CD4-positive, alpha-beta memory T cell (primary cell): ENCODE measurements at regions of chr7 and their contacts with region 1.

Region 1: DNA sequence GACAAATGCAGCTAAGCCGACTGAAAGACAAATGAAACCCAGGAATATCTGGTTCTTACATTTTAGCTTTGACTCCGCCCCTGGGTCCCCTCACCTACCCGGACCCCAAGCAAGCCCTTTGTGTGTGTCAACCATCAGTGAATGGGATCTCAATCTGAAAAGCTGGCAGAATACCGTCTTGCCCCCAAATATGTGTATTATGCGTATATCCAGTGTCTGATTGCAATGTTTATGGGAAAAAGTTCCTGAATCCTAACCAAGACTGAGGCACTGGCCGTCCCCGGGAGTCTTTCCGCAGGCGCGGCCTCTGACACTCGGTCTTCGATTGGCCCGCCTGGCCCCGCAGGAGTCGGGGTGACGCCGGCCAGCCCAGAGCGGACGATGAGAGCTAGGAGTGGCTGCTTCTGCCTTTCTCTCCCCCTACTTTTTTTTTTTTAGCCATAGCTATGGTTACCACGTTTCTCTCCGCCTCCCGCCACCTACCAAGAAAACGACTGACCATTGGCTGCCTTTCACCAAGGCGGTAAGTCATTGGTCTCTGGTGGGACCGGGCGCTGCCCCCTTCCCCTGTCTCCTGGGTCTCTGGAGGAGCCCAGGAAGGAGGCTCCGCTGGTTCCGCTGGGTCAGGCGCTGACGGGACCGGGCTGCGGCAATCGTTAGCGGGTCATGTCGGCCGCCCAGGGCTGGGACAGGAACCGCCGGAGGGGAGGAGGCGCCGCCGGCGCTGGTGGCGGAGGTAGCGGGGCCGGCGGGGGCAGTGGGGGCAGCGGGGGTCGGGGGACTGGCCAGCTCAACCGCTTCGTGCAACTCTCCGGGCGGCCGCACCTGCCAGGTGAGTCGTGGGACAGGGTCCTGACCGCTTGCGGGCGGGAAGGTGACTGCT is at the start of gene KLHDC10:
- DNase-seq: peak; percentile 96 to 98 (median 97)
- H3K4me3 ChIP-seq: peak within 1 kb of the TSS; percentile 63 to 89
- H3K4me3 Mint-ChIP-seq: peak within 1 kb of the TSS; percentile 88 to 97 (median 94)
- H3K27ac ChIP-seq: peak within 1 kb of the TSS; percentile 68
- H3K27ac Mint-ChIP-seq: peak within 1 kb of the TSS; percentile 91 to 99 (median 94)
- H3K4me1 ChIP-seq: peaks cover 48% of the 10 kb centered on the region
- H3K4me1 Mint-ChIP-seq: peaks cover 28 to 50% (median 41%) of the 10 kb centered on the region in 4 donors
- H3K27me3 ChIP-seq: no peaks in the 10 kb centered on the region
- H3K27me3 Mint-ChIP-seq: peaks cover 2% of the 10 kb centered on the region in 2 donors
- total RNA-seq, gene KLHDC10: 21.4 to 22.3 TPM

Region 2: GRCh38 chr7:129670656-129671055 is 399.6 kb before region 1 on chr7:
- CTCF ChIA-PET with region 1: no interaction called
- POLR2A ChIA-PET with region 1: no interaction called
- intact Hi-C with region 1: no loop called
- DNase-seq: no peak
- H3K4me3 ChIP-seq: no peak overlapping the region
- H3K4me3 Mint-ChIP-seq: no peak overlapping the region
- H3K27ac ChIP-seq: no peak overlapping the region
- H3K27ac Mint-ChIP-seq: no peak overlapping the region
- H3K4me1 ChIP-seq: no peaks in the 10 kb centered on the region
- H3K4me1 Mint-ChIP-seq: peaks cover 0 to 7% (median 1%) of the 10 kb centered on the region in 4 donors
- H3K27me3 ChIP-seq: no peaks in the 10 kb centered on the region
- H3K27me3 Mint-ChIP-seq: no peaks in the 10 kb centered on the region

Region 3: GRCh38 chr7:129840757-129841156 is 229.5 kb before region 1 on chr7:
- CTCF ChIA-PET with region 1: no interaction called
- POLR2A ChIA-PET with region 1: no interaction called
- intact Hi-C with region 1: no loop called
- DNase-seq: no peak
- H3K4me3 ChIP-seq: no peak overlapping the region
- H3K4me3 Mint-ChIP-seq: peak overlapping the region in 2 of 8 donors; percentile 30 to 33
- H3K27ac ChIP-seq: no peak overlapping the region
- H3K27ac Mint-ChIP-seq: peak overlapping the region in 4 of 7 donors; percentile 19 to 82 (median 52)
- H3K4me1 ChIP-seq: peaks cover 43% of the 10 kb centered on the region
- H3K4me1 Mint-ChIP-seq: peaks cover 34 to 52% (median 41%) of the 10 kb centered on the region in 4 donors
- H3K27me3 ChIP-seq: no peaks in the 10 kb centered on the region
- H3K27me3 Mint-ChIP-seq: no peaks in the 10 kb centered on the region

Region 4: GRCh38 chr7:129952653-129953560 is 117.3 kb before region 1 on chr7 and contains the start of gene UBE2H:
- CTCF ChIA-PET with region 1: no interaction called
- POLR2A ChIA-PET with region 1: no interaction called
- intact Hi-C with region 1: loop called (anchors 2 kb)
- DNase-seq: peak; percentile 83 to 89 (median 86)
- H3K4me3 ChIP-seq: peak within 1 kb of the TSS; percentile 53 to 85
- H3K4me3 Mint-ChIP-seq: peak within 1 kb of the TSS; percentile 95 to 100 (median 99)
- H3K27ac ChIP-seq: peak within 1 kb of the TSS; percentile 96
- H3K27ac Mint-ChIP-seq: peak within 1 kb of the TSS in 6 of 7 donors; percentile 94 to 100 (median 100)
- H3K4me1 ChIP-seq: peaks cover 42% of the 10 kb centered on the region
- H3K4me1 Mint-ChIP-seq: peaks cover 5 to 16% (median 7%) of the 10 kb centered on the region in 4 donors
- H3K27me3 ChIP-seq: no peaks in the 10 kb centered on the region
- H3K27me3 Mint-ChIP-seq: peaks cover 0 to 2% of the 10 kb centered on the region in 2 donors
- total RNA-seq, gene UBE2H: 42.6 to 43.8 TPM

Region 5: DNA sequence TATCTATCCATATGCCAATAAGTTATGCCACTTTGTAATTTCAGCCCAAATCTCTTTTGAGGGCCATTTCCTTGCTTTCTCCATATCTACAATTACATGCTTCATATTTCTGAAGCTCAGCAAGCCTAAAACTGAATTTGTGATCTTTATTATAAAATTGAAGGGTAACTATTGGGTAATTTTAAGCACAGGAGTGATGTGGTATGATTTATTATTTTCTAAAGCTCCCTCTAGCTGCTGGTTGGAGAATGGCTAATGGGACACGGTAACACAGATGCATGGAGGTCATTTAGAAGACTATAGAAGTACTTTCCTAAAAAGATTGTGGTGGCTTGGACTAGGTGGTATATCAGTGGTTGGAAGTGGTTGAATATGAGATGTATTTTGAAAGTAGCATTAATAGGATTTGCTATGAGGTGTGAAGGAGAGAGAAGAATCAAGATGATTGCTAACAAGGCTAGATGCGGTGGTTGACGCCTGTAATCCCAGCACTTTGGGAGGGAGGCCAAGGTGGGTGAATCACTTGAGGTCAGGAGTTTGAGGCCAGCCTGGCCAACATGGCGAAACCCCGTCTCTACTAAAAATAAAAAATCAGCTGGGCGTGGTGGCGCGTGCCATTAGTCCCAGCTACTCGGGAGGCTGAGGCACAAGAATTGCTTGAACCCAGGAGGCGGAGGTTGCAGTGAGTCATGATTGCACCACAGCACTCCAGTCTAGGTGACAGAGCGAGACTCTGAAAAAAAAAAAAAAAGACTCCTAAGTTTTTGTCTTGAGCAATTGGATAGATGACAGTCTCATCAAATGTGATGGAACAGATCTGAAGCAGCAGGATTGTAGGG is 14.0 kb after region 1 on chr7:
- CTCF ChIA-PET with region 1: interaction called, 19 read pairs
- POLR2A ChIA-PET with region 1: interaction called, 4 read pairs
- intact Hi-C with region 1: no loop called
- DNase-seq: peak in 1 of 5 donors; percentile 8
- H3K4me3 ChIP-seq: no peak overlapping the region
- H3K4me3 Mint-ChIP-seq: peak overlapping the region in 1 of 8 donors; percentile 14
- H3K27ac ChIP-seq: no peak overlapping the region
- H3K27ac Mint-ChIP-seq: peak overlapping the region in 2 of 7 donors; percentile 37 to 38
- H3K4me1 ChIP-seq: no peaks in the 10 kb centered on the region
- H3K4me1 Mint-ChIP-seq: peaks cover 11 to 27% (median 19%) of the 10 kb centered on the region in 4 donors
- H3K27me3 ChIP-seq: no peaks in the 10 kb centered on the region
- H3K27me3 Mint-ChIP-seq: no peaks in the 10 kb centered on the region

Region 6: GRCh38 chr7:130174237-130174959 is 104.2 kb after region 1 on chr7:
- CTCF ChIA-PET with region 1: no interaction called
- POLR2A ChIA-PET with region 1: no interaction called
- intact Hi-C with region 1: no loop called
- DNase-seq: no peak
- H3K4me3 ChIP-seq: no peak overlapping the region
- H3K4me3 Mint-ChIP-seq: no peak overlapping the region
- H3K27ac ChIP-seq: no peak overlapping the region
- H3K27ac Mint-ChIP-seq: no peak overlapping the region
- H3K4me1 ChIP-seq: no peaks in the 10 kb centered on the region
- H3K4me1 Mint-ChIP-seq: peaks cover 0 to 2% (median 0%) of the 10 kb centered on the region in 4 donors
- H3K27me3 ChIP-seq: no peaks in the 10 kb centered on the region
- H3K27me3 Mint-ChIP-seq: no peaks in the 10 kb centered on the region

Region 7: DNA sequence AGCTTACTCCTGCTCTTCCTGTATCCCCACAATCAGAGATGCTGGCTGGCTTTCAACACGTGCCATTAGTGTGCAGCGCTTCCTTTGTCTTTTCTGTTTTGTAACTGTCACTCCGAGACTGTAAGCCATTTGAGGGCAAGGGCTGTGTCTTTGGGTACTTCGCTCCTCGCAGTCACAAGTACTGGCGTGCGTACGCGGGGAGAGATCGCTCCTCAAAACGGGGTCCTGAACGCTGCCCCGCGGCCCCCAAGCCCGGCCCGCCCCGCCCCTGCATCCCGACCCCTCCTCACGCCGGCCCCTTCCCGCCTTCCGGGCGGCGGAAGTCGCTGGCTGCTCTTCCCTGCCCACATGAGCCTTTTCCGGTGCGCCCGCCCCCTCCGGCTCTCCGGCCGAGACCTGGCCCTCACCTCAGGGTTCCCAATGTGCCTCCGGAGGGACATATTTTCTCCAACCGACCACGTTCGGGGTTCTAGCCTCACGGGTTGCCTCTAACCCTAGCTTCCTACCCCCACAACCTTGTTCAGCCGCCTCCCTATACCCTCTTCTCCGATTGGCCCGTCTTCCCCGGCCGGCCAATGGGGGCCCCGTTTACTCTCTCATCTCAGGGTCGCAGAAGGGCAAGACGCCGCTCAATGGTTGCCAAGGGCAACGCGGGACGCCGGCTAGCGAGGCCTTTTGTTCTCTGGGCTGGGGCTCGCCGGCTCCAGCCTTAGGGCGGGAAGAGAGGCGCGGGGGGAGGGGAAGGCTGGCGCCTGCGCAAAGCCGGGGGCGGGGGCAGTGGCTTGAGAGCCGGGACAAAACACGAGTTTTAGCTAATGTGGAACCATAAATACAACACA is 370.5 kb after region 1 on chr7 and contains the start of gene CEP41:
- CTCF ChIA-PET with region 1: no interaction called
- POLR2A ChIA-PET with region 1: no interaction called
- intact Hi-C with region 1: loop called (anchors 2 kb)
- DNase-seq: peak; percentile 87 to 90 (median 88)
- H3K4me3 ChIP-seq: peak within 1 kb of the TSS; percentile 59 to 81
- H3K4me3 Mint-ChIP-seq: peak within 1 kb of the TSS; percentile 96 to 99 (median 98)
- H3K27ac ChIP-seq: peak within 1 kb of the TSS; percentile 58
- H3K27ac Mint-ChIP-seq: peak within 1 kb of the TSS; percentile 90 to 98 (median 97)
- H3K4me1 ChIP-seq: peaks cover 13% of the 10 kb centered on the region
- H3K4me1 Mint-ChIP-seq: peaks cover 18 to 27% (median 19%) of the 10 kb centered on the region in 4 donors
- H3K27me3 ChIP-seq: no peaks in the 10 kb centered on the region
- H3K27me3 Mint-ChIP-seq: peaks cover 0 to 4% of the 10 kb centered on the region in 2 donors
- total RNA-seq, gene CEP41: 6.0 to 7.3 TPM

Region 8: GRCh38 chr7:130758429-130759056 is 688.3 kb after region 1 on chr7:
- CTCF ChIA-PET with region 1: interaction called, 31 read pairs
- POLR2A ChIA-PET with region 1: no interaction called
- intact Hi-C with region 1: loop called (anchors 1 kb)
- DNase-seq: peak in 4 of 5 donors; percentile 27 to 45 (median 38)
- H3K4me3 ChIP-seq: no peak overlapping the region
- H3K4me3 Mint-ChIP-seq: no peak overlapping the region
- H3K27ac ChIP-seq: no peak overlapping the region
- H3K27ac Mint-ChIP-seq: no peak overlapping the region
- H3K4me1 ChIP-seq: no peaks in the 10 kb centered on the region
- H3K4me1 Mint-ChIP-seq: no peaks in the 10 kb centered on the region
- H3K27me3 ChIP-seq: no peaks in the 10 kb centered on the region
- H3K27me3 Mint-ChIP-seq: peaks cover 0 to 5% of the 10 kb centered on the region in 2 donors